Activated T-helper 1 cell treated with anti-CD3 and anti-CD28 coated beads, Interleukin-12 subunit alpha, Interleukin-12 subunit beta, Interleukin-2, Interleukin-4 antibody, amounts not matched to agents 30 ng/mL and 10 ng/mL and 1 ng/mL, durations not matched to agents 14 hours and 24 hours and 36 hours (primary cell): ENCODE measurements at regions of chr17 and their contacts with region 1.

Region 1: GRCh38 chr17:76072148-76072858 is at the start of gene SRP68:
- DNase-seq: peak; percentile 83
- H3K4me3 Mint-ChIP-seq: peak within 1 kb of the TSS; percentile 97
- H3K27ac Mint-ChIP-seq: peak within 1 kb of the TSS; percentile 98
- H3K4me1 Mint-ChIP-seq: peaks cover 43% of the 10 kb centered on the region
- H3K27me3 Mint-ChIP-seq: peaks cover 27% of the 10 kb centered on the region
- total RNA-seq, gene SRP68: 177 and 184 TPM in 2 replicates

Region 2: DNA sequence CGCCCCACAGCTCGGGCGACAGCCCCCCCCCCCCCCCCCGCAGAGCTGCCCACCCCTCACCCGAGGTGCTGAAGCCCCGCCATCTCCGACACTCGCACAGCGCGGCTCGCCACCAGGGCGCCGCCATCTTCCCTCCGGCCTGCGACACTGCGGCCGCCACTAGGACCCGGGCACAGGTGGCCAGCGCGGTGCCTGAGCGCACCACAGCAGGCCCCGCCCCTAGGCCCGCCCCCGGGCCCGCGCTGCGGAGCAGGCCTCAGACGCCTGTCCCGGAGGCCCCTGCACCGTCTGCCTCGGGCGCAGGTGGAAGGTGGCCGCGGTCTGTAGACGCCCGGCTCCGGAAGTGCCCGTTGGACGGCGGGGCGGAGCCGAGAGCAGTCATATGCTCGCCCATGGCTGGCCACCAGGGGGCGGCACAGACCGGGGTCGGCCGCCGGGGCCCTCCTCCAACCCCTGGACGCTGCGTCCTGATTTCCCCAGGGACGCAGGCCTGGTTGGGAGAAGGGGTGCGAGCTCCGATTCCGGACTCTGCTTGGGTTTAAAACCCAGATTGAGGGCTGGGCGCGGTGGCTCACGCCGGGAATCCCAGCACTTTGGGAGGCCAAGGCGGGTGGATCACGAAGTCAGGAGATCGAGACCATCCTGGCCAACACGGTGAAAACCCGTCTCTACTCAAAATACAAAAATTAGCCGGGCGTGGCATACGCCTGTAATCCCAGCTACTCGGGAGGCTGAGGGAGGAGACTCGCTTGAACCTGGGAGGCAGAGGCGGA is 167.4 kb before region 1 on chr17 and contains the start of gene MRPL38:
- intact Hi-C with region 1: loop called (anchors 1 kb)
- DNase-seq: peak; percentile 96
- H3K4me3 Mint-ChIP-seq: peak within 1 kb of the TSS; percentile 99
- H3K27ac Mint-ChIP-seq: peak within 1 kb of the TSS; percentile 84
- H3K4me1 Mint-ChIP-seq: peaks cover 12% of the 10 kb centered on the region
- H3K27me3 Mint-ChIP-seq: no peaks in the 10 kb centered on the region
- total RNA-seq, gene MRPL38: 151 and 160 TPM in 2 replicates

Region 3: GRCh38 chr17:76103274-76104139 is 31.2 kb after region 1 on chr17 and contains the start of gene EXOC7:
- intact Hi-C with region 1: loop called (anchors 2 kb)
- DNase-seq: peak; percentile 93
- H3K4me3 Mint-ChIP-seq: peak within 1 kb of the TSS; percentile 96
- H3K27ac Mint-ChIP-seq: peak within 1 kb of the TSS; percentile 93
- H3K4me1 Mint-ChIP-seq: peaks cover 15% of the 10 kb centered on the region
- H3K27me3 Mint-ChIP-seq: peaks cover under 1% of the 10 kb centered on the region
- total RNA-seq, gene EXOC7: 108 and 116 TPM in 2 replicates

Region 4: DNA sequence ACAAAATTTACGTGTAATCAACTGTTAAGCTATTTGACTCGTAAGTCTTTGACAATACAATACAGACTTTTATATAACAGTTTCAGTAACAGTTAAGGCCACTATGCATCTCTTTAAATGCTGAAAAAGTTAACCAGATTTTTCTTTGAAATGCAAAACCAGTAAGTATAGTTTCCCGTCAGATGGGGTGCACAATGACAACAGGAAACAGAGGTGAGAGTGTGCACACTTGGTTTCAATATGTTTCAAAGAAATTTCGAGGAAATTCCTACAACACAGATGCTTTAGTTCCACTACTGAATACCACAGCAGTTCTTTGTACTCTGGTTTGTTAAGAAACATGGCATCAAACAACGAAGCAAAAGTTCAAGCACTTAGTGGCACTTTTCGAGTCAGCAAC is 119.6 kb after region 1 on chr17:
- intact Hi-C with region 1: loop called (anchors 1 kb)
- DNase-seq: peak; percentile 64
- H3K4me3 Mint-ChIP-seq: peak overlapping the region; percentile 80
- H3K27ac Mint-ChIP-seq: peak overlapping the region; percentile 92
- H3K4me1 Mint-ChIP-seq: peaks cover 79% of the 10 kb centered on the region
- H3K27me3 Mint-ChIP-seq: no peaks in the 10 kb centered on the region

Region 5: DNA sequence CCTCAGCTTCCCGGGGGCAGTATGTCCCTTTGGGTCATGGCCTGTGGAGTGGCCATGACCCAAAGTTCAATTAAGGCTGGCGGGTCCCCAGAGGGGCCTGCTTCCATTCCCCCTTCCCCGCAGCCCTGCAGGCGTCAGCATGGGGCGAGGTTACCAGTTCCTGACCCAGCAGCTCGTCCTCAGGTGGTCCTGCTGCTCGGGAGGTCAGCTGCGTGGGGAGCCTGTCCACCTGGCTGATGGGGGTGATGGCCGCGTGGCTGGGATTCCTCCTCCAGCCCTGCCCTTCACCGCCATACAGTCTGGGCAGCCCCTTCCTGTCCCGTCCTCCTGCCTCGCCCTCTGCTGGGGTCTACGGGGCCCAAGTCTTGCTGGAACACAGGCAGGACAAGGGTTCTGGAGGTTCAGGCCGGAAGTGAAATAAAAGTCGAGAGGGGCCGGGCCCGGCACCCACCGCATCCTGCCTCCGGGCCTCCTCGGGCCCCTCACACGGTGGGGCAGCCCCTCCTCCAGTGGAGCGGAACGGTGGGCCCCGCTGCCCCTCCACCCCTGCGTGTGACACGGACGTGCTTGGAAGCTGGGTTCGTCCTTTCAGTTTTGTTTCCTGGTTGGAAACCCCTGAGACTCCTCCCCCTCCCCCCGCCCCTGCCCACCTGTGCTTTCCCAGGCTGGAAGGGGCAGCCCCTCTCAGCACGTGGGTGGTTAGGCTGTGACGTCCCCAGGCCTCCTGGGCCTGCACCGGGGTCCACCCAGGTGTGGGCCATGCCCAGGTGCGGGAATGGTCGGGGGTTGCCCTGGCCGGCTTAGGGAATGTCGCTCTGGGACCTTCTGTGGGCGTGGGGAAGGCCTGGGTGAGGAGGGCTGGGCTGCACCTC is 199.6 kb after region 1 on chr17:
- intact Hi-C with region 1: loop called (anchors 1 kb)
- DNase-seq: peak; percentile 70
- H3K4me3 Mint-ChIP-seq: peak overlapping the region; percentile 79
- H3K27ac Mint-ChIP-seq: peak overlapping the region; percentile 94
- H3K4me1 Mint-ChIP-seq: peaks cover 45% of the 10 kb centered on the region
- H3K27me3 Mint-ChIP-seq: no peaks in the 10 kb centered on the region